Sigmoid colon (tissue), 7 donors: ENCODE measurements at regions of chr1 and their contacts with region 1.

Region 1: DNA sequence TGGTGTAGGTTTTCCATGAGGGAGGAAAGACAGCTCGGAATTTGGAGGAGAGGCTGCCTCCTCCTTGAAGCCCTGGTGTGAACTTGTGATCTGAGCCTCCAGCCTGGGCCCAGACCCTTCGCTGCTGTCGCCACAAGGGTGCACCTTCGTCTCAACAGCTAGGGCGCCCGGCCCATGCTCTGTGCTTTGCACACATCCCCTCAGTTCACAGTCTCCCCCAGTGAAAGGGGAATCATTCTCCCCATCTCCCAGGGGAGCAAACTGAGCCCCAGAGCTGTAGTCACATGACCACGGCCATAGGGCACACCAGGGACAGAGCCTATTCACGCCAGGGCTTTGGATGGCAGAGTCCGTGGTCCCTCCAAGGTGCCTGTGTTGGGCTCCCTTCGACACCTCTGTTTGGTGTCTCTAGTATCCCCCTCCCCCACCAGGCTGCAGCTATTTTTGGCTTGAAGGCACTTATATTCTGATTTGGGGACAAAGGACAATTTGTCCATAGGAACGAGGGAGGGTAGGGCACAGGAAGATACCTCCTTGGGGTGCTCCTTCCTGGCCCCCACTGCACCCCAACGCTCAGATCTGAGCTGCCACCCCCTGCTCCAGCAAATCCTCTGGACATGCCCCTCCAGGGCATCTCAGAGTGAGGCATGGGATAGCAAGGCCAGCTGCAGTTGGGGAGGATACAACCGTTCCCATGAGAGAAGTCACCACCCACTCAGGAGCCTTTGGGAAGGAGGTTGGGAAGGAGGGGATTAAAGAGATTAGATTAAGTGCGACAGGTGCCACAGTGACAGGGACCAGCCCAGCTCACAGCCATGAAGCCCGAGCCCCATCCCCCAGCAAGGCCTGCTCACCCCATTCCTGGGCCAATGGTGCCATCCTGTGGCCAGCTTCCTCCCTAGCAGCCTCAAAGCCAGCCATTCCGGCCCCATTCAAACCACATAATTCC is 15.7 kb downstream of the MATN1 start:
- DNase-seq: peak; percentile 87
- H3K4me3 ChIP-seq: no peak overlapping the region
- H3K27ac ChIP-seq: no peak overlapping the region
- H3K4me1 ChIP-seq: peaks cover 0 to 44% (median 36%) of the 10 kb centered on the region in 4 donors
- H3K27me3 ChIP-seq: no peaks in the 10 kb centered on the region
- CTCF ChIP-seq: peak; percentile 81 to 94 (median 90)
- EP300 ChIP-seq: no peak
- POLR2A ChIP-seq: no peak

Region 2: GRCh38 chr1:29793101-29793546 is 914.6 kb before region 1 on chr1:
- intact Hi-C with region 1: loop called (anchors 2 kb)
- DNase-seq: peak; percentile 80
- H3K4me3 ChIP-seq: no peak overlapping the region
- H3K27ac ChIP-seq: no peak overlapping the region
- H3K4me1 ChIP-seq: no peaks in the 10 kb centered on the region
- H3K27me3 ChIP-seq: peaks cover 0 to 20% (median 3%) of the 10 kb centered on the region in 3 donors
- CTCF ChIP-seq: peak; percentile 8 to 61 (median 50)
- EP300 ChIP-seq: no peak
- POLR2A ChIP-seq: no peak

Region 3: DNA sequence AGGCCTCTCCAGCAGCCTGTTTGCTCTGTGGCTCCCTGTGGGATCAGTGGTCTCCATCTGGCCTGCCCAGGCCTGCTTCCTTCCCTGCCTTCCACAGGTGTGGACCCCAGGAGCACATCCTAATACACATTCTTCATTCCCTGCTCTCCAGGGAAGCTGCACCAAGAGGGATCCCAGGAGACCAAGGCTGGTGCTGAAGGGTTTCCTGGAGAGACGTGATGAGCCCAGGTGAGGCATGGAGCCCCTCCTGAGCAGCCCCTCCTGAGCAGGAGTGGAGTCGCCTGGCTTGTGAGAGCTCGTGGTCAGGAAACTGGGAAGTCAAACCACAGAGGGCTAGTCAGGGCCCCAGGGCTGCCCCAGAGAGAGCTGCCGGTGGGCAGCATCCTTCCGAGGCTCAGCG is 545.7 kb before region 1 on chr1:
- intact Hi-C with region 1: no loop called
- DNase-seq: no peak
- H3K4me3 ChIP-seq: no peak overlapping the region
- H3K27ac ChIP-seq: no peak overlapping the region
- H3K4me1 ChIP-seq: no peaks in the 10 kb centered on the region
- H3K27me3 ChIP-seq: peaks cover 0 to 5% (median 0%) of the 10 kb centered on the region in 3 donors
- CTCF ChIP-seq: no peak
- EP300 ChIP-seq: no peak
- POLR2A ChIP-seq: no peak

Region 4: GRCh38 chr1:30379684-30380624 is 327.7 kb before region 1 on chr1:
- intact Hi-C with region 1: loop called (anchors 5 kb)
- DNase-seq: peak; percentile 68
- H3K4me3 ChIP-seq: no peak overlapping the region
- H3K27ac ChIP-seq: no peak overlapping the region
- H3K4me1 ChIP-seq: peaks cover 0 to 17% (median 11%) of the 10 kb centered on the region in 4 donors
- H3K27me3 ChIP-seq: peaks cover 0 to 38% (median 0%) of the 10 kb centered on the region in 3 donors
- CTCF ChIP-seq: peak; percentile 48 to 83 (median 72)
- EP300 ChIP-seq: no peak
- POLR2A ChIP-seq: no peak